ENCODE measurements at regions of chr2 and their contacts with region 1.

Region 1: GRCh38 chr2:157497638-157498314 is 53.9 kb upstream of the CYTIP start:
- DNase-seq: peak; percentile 74
- H3K4me3 Mint-ChIP-seq: no peak overlapping the region
- H3K27ac Mint-ChIP-seq: no peak overlapping the region
- H3K4me1 Mint-ChIP-seq: peaks cover 34% of the 10 kb centered on the region
- H3K27me3 Mint-ChIP-seq: no peaks in the 10 kb centered on the region

Region 2: DNA sequence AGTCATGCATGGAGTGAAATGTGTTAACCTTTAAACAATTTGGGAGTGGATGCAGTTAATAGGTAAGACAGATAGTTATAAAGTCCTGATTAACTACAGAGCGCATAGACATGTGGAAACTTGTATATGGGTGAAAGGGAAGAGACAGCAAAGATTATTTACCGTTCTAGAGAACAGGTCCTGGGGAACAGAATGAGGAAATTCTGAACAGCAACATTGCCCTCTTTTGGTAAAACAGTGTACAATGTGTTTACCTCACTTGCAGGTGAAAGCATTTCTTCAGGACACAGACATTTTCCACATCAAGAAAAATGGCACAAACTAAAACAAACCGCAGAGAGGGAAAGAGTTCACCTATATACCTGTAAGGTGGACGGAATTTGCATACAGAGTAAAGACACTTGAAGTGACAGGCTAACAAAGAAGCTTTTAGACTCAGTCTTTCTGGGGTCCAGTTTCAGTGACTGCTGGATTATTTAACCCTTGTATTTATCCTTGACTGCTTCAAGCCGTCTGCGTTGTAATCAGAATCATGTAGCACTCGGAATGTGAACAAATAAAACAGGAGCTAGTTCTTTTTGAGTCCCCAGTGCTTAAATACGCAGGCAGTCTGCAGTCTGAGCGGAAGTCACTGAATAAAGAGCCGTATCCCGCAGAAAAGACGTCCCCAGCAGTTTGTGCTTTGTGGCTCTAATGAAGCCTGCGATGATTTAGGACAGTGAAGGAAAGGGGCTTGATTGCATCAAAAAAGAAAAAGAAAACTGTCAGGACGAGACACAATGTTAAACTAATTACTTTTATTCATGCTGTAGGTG is 605.1 kb before region 1 on chr2:
- intact Hi-C with region 1: no loop called
- DNase-seq: peak; percentile 66
- H3K4me3 Mint-ChIP-seq: peak overlapping the region; percentile 25
- H3K27ac Mint-ChIP-seq: no peak overlapping the region
- H3K4me1 Mint-ChIP-seq: peaks cover 33% of the 10 kb centered on the region
- H3K27me3 Mint-ChIP-seq: peaks cover 52% of the 10 kb centered on the region

Region 3: GRCh38 chr2:157596992-157597681 is 99.4 kb after region 1 on chr2:
- intact Hi-C with region 1: loop called (anchors 1 kb)
- DNase-seq: peak; percentile 86
- H3K4me3 Mint-ChIP-seq: peak overlapping the region; percentile 73
- H3K27ac Mint-ChIP-seq: no peak overlapping the region
- H3K4me1 Mint-ChIP-seq: peaks cover 7% of the 10 kb centered on the region
- H3K27me3 Mint-ChIP-seq: peaks cover 35% of the 10 kb centered on the region

Region 4: GRCh38 chr2:158745044-158745865 is 1247.5 kb after region 1 on chr2:
- intact Hi-C with region 1: loop called (anchors 5 kb)
- DNase-seq: peak; percentile 73
- H3K4me3 Mint-ChIP-seq: no peak overlapping the region
- H3K27ac Mint-ChIP-seq: no peak overlapping the region
- H3K4me1 Mint-ChIP-seq: no peaks in the 10 kb centered on the region
- H3K27me3 Mint-ChIP-seq: peaks cover 7% of the 10 kb centered on the region